ENCODE measurements at regions of chr5 and their contacts with region 1.

Region 1: DNA sequence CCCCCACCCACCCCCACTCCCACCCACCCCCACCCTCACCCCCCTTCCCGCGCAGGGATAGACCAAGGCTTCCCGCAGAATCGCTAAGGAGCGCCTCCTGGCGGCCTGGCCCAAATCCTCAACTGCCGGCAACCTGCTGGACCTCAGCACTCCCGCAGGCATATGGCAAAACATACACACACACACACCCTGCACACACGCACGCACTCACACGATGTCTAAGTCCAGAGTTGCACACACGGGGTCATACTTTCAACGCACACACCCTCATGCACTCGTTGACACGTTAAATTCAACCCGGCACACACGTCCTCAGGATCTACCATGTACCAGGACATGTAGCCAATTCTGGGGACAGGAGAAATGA is 1.7 kb downstream of the CPLX2 start:
- DNase-seq: peak; percentile 73 to 84
- ATAC-seq: peak; percentile 31 to 67
- H3K4me3 ChIP-seq: peak overlapping the region; percentile 82
- H3K27ac ChIP-seq: peak overlapping the region; percentile 97 to 99
- H3K4me1 ChIP-seq: peaks cover 77% of the 10 kb centered on the region
- CTCF ChIP-seq: peak; percentile 55
- EP300 ChIP-seq: no peak
- POLR2A ChIP-seq: no peak
- RAD21 ChIP-seq: peak; percentile 65 to 72

Region 2: DNA sequence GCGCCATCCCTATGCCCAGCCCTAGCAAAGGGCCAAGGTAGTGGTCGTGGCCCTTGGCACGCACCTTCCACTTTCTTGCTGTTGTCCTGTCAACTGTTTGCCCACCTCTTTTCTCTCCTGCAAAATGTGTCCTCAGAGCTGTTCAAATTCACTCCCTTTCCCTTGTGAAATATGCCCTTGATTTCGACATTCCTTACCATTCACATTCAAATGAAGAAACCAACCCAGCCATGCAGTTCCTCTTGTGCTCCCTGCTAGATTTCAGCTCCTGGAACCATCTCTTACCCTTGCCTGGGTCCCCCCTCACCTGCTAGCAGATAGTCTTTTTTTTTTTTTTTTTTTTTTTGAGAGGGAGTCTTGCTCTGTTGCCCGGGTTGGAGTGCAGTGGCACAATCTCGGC is 234.8 kb before region 1 on chr5:
- CTCF ChIA-PET with region 1: no interaction called
- POLR2A ChIA-PET with region 1: no interaction called
- DNase-seq: no peak
- ATAC-seq: no peak
- H3K4me3 ChIP-seq: no peak overlapping the region
- H3K27ac ChIP-seq: no peak overlapping the region
- H3K4me1 ChIP-seq: no peaks in the 10 kb centered on the region
- CTCF ChIP-seq: no peak
- EP300 ChIP-seq: no peak
- POLR2A ChIP-seq: no peak
- RAD21 ChIP-seq: no peak

Region 3: DNA sequence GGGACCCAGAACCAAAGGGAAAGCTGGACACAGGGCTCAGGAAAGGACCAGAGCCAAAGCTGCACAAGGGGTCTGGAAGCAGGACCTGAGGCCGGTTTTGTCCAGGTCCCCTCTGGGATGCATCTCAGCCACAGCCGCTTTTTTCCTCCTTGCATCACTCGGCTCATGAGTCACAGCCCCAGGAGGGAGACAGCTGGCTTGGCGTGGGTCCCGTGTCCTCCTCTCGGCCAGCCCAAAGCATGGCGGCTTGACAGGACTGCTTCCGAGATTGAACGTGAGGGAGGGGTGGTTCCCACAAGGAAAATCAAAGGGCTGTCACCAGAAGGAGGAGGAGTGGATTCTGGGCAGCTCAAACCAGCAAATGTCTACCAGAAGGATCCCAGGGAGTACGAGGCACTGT is 58.4 kb before region 1 on chr5:
- CTCF ChIA-PET with region 1: interaction called, 11 read pairs
- POLR2A ChIA-PET with region 1: no interaction called
- DNase-seq: peak; percentile 76 to 94
- ATAC-seq: peak; percentile 72 to 77
- H3K4me3 ChIP-seq: no peak overlapping the region
- H3K27ac ChIP-seq: peak overlapping the region; percentile 88 to 90
- H3K4me1 ChIP-seq: peaks cover 40% of the 10 kb centered on the region
- CTCF ChIP-seq: no peak
- EP300 ChIP-seq: peak in 1 of 2 experiments; percentile 43; a peak in 2 of 5 replicates
- POLR2A ChIP-seq: no peak
- RAD21 ChIP-seq: peak in 1 of 2 experiments; percentile 13; a peak in 1 of 5 replicates

Region 4: GRCh38 chr5:175847503-175847902 is 25.6 kb before region 1 on chr5:
- CTCF ChIA-PET with region 1: interaction called, 28 read pairs
- POLR2A ChIA-PET with region 1: interaction called, 5 read pairs
- DNase-seq: peak; percentile 82 to 84
- ATAC-seq: peak; percentile 67 to 86
- H3K4me3 ChIP-seq: no peak overlapping the region
- H3K27ac ChIP-seq: peak overlapping the region; percentile 97 to 99
- H3K4me1 ChIP-seq: peaks cover 91% of the 10 kb centered on the region
- CTCF ChIP-seq: peak; percentile 45
- EP300 ChIP-seq: no peak
- POLR2A ChIP-seq: no peak
- RAD21 ChIP-seq: peak; percentile 66 to 72

Region 5: DNA sequence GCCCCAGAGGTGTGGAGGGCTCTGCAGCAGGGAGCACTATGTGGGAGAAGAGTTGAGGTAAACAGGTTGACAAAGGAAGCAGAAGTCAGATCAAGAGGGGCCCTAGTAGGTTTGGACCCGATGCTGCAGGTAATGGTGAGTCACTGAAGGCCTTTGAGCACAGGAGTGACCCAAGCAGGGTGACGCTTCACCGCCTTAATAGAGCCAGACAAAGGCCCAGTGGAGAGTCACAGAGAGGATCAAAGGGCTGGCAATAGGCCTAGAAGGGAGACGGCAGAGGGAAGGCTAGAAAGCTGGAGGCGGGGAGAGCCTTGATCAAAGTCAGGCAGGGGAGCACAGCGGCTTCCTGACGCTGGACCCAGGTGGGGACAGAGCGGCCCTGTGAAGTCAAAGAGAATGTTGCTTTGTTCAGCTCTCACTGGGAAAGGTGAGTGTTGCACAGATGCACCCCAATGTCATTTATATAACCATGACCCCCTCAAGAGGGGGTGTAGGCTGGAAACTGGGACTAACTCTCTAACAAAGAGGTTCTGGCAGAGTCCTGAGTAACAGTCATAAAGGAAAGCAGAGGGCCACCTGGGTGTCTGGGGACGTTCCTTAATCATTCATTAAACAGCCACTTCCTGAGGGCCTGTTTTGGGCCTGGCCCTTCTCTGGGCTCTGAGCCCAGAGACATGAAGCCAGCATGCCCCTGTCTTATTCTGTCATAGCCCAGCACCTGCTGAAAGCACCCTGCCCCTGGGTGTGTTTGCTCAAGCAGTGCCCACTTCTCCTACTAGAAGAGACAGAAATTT is 11.5 kb before region 1 on chr5:
- CTCF ChIA-PET with region 1: interaction called, 38 read pairs
- POLR2A ChIA-PET with region 1: interaction called, 4 read pairs
- DNase-seq: peak; percentile 79 to 96
- ATAC-seq: peak; percentile 76 to 80
- H3K4me3 ChIP-seq: no peak overlapping the region
- H3K27ac ChIP-seq: peak overlapping the region; percentile 97 to 99
- H3K4me1 ChIP-seq: peaks cover 97% of the 10 kb centered on the region
- CTCF ChIP-seq: no peak
- EP300 ChIP-seq: peak; percentile 91 to 96; a peak in 4 of 5 replicates
- POLR2A ChIP-seq: no peak
- RAD21 ChIP-seq: peak in 1 of 2 experiments; percentile 24; a peak in 2 of 5 replicates